GM18951 (cell line): ENCODE measurements at regions of chr20 and their contacts with region 1.

Region 1: GRCh38 chr20:29873946-29874345 is 1383.5 kb upstream of the DEFB115 start:
- POLR2A ChIP-seq: no peak

Region 2: GRCh38 chr20:29452186-29452585 is 421.8 kb before region 1 on chr20:
- in situ Hi-C with region 1: no loop called
- POLR2A ChIP-seq: no peak

Region 3: DNA sequence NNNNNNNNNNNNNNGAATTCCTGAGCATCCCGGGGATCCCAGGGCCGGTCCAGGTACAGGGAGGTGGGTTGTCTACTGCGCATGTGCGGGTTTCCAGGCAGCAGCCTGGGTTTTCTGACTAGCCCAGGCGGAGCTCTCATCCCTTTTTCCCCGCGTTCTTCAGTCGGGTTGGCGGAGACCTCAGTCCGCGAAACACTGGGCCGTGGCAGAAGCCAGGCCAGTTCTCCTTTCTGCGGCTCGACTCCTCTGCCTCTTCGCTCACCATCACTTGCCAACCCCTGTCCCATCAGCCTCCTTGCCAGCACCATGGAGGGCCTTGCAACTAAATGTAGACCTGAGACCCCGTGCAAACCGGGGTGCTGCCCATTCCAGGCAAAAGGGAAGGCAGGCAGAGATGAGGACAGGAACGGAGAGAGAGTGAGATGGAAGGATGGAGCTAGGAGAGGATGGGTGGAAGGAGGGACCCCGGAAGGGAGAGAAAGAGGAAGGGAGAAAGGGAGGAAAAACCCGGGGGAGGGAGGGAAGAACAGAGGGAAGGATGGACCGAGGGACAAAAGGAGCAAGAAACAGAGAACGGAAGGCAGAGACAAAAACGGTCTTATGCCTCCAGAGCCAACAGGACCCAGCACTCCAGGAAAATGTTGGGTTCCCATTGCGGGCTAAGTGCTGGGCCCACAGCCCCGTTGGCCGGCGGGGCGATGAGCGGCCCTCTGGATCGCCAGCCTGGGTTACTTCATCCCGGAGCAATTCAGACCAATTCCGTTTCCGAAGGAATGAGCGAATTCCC is 938.1 kb after region 1 on chr20:
- in situ Hi-C with region 1: loop called (anchors 10 kb)
- POLR2A ChIP-seq: no peak